T-cell (primary cell): ENCODE measurements at regions of chr19 and their contacts with region 1.

Region 1: DNA sequence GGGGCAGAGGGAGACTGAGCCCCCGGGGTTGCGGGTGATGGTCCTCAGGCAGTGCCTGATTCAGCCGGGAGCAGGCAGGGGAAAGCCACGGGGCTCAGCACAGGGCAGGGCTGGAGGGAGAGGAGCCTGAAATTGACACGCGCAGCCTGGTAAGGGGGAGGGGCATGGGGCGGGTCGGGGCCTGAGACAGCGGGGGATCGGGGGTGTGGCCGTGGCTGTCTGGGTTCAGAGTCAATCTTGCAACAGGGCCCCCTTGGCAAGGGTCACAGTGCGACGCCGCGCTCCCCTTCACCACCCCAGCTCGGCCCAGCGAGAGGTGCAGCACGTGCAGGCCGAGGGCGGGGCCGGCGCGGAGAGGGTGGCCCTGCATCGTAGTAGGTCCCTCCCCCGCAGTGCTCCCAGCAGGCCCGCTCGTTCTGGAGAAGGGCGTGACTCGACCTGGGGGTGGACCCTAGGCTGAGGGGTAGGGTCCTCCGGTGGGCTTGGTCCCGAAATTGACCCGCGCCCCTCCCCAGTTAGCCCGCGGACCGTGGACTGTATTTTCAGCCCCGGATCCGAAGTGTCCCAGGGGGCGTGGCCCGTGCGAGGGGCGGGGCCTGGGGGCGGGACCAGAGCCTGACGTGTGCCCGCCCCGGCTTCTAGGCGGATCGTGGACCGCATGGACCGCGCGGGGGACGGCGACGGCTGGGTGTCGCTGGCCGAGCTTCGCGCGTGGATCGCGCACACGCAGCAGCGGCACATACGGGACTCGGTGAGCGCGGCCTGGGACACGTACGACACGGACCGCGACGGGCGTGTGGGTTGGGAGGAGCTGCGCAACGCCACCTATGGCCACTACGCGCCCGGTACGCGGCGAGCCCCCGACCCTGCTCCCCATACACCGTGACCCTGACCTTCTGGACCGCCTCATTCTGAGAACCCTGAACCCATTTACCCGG is 6.0 kb downstream of the RCN3 start:
- DNase-seq: peak; percentile 60 to 91 (median 79)
- ATAC-seq: peak; percentile 90 to 93 (median 92)
- H3K4me3 ChIP-seq: peak overlapping the region; percentile 72 to 78
- H3K4me3 Mint-ChIP-seq: peak overlapping the region; percentile 76 to 83 (median 81)
- H3K27ac ChIP-seq: no peak overlapping the region
- H3K27ac Mint-ChIP-seq: peak overlapping the region; percentile 78 to 79
- H3K4me1 ChIP-seq: peaks cover 12 to 27% of the 10 kb centered on the region in 2 experiments
- H3K4me1 Mint-ChIP-seq: peaks cover 20 to 28% (median 26%) of the 10 kb centered on the region in 3 donors
- H3K27me3 ChIP-seq: peaks cover 0 to 2% of the 10 kb centered on the region in 2 experiments
- H3K27me3 Mint-ChIP-seq: no peaks in the 10 kb centered on the region

Region 2: GRCh38 chr19:48933382-48933932 is 600.4 kb before region 1 on chr19 and contains the start of gene DHDH:
- CTCF ChIA-PET with region 1: no interaction called
- POLR2A ChIA-PET with region 1: no interaction called
- DNase-seq: peak; percentile 76 to 91 (median 84)
- ATAC-seq: peak; percentile 96 to 98 (median 98)
- H3K4me3 ChIP-seq: peak within 1 kb of the TSS; percentile 54 to 62
- H3K4me3 Mint-ChIP-seq: peak within 1 kb of the TSS; percentile 83 to 91 (median 83)
- H3K27ac ChIP-seq: peak within 1 kb of the TSS; percentile 42
- H3K27ac Mint-ChIP-seq: peak within 1 kb of the TSS; percentile 89 to 91
- H3K4me1 ChIP-seq: peaks cover 2 to 16% of the 10 kb centered on the region in 2 experiments
- H3K4me1 Mint-ChIP-seq: peaks cover 9 to 16% (median 10%) of the 10 kb centered on the region in 3 donors
- H3K27me3 ChIP-seq: peaks cover 0 to 4% of the 10 kb centered on the region in 2 experiments
- H3K27me3 Mint-ChIP-seq: peaks cover 0 to 2% of the 10 kb centered on the region in 2 donors
- total RNA-seq, gene DHDH: 0.93 to 1.7 (median 1.2) TPM

Region 3: GRCh38 chr19:49499030-49499670 is 34.7 kb before region 1 on chr19:
- CTCF ChIA-PET with region 1: no interaction called
- POLR2A ChIA-PET with region 1: no interaction called
- DNase-seq: peak in 4 of 35 experiments; percentile 28 to 51 (median 34)
- ATAC-seq: no peak
- H3K4me3 ChIP-seq: peak overlapping the region; percentile 78 to 92
- H3K4me3 Mint-ChIP-seq: peak overlapping the region; percentile 99 to 100 (median 100)
- H3K27ac ChIP-seq: peak overlapping the region; percentile 92
- H3K27ac Mint-ChIP-seq: peak overlapping the region; percentile 95 to 100
- H3K4me1 ChIP-seq: peaks cover 22 to 78% of the 10 kb centered on the region in 2 experiments
- H3K4me1 Mint-ChIP-seq: peaks cover 57 to 64% (median 64%) of the 10 kb centered on the region in 3 donors
- H3K27me3 ChIP-seq: no peaks in the 10 kb centered on the region
- H3K27me3 Mint-ChIP-seq: no peaks in the 10 kb centered on the region

Region 4: GRCh38 chr19:49512970-49513745 is 20.7 kb before region 1 on chr19:
- CTCF ChIA-PET with region 1: interaction called, 3 to 4 read pairs
- POLR2A ChIA-PET with region 1: interaction called, 3 to 10 read pairs
- DNase-seq: peak in 3 of 35 experiments; percentile 13 to 50 (median 44)
- ATAC-seq: peak; percentile 70 to 74 (median 71)
- H3K4me3 ChIP-seq: peak overlapping the region; percentile 57 to 71
- H3K4me3 Mint-ChIP-seq: peak overlapping the region; percentile 74 to 91 (median 86)
- H3K27ac ChIP-seq: peak overlapping the region; percentile 61
- H3K27ac Mint-ChIP-seq: peak overlapping the region; percentile 87 to 89
- H3K4me1 ChIP-seq: peaks cover 21 to 48% of the 10 kb centered on the region in 2 experiments
- H3K4me1 Mint-ChIP-seq: peaks cover 37 to 43% (median 38%) of the 10 kb centered on the region in 3 donors
- H3K27me3 ChIP-seq: no peaks in the 10 kb centered on the region
- H3K27me3 Mint-ChIP-seq: no peaks in the 10 kb centered on the region